Naive thymus-derived CD4-positive, alpha-beta T cell (primary cell): ENCODE measurements at regions of chr6 and their contacts with region 1.

Region 1: GRCh38 chr6:158686791-158687381 is 37.0 kb downstream of the SYTL3 start:
- DNase-seq: peak; percentile 29 to 92 (median 87)
- ATAC-seq: peak; percentile 96
- H3K4me3 ChIP-seq: peak overlapping the region; percentile 31
- H3K4me3 Mint-ChIP-seq: peak overlapping the region; percentile 66 to 91 (median 79)
- H3K27ac ChIP-seq: peak overlapping the region; percentile 82
- H3K27ac Mint-ChIP-seq: peak overlapping the region; percentile 88 to 100 (median 98)
- H3K4me1 ChIP-seq: peaks cover 28 to 49% of the 10 kb centered on the region in 2 donors
- H3K4me1 Mint-ChIP-seq: peaks cover 36 to 76% (median 70%) of the 10 kb centered on the region in 7 donors
- H3K27me3 ChIP-seq: no peaks in the 10 kb centered on the region
- H3K27me3 Mint-ChIP-seq: no peaks in the 10 kb centered on the region

Region 2: GRCh38 chr6:158207422-158207788 is 479.5 kb before region 1 on chr6:
- CTCF ChIA-PET with region 1: no interaction called
- POLR2A ChIA-PET with region 1: no interaction called
- intact Hi-C with region 1: loop called in 1 of 2 experiments (anchors 1 kb)
- DNase-seq: peak in 4 of 9 donors; percentile 9 to 42 (median 18)
- ATAC-seq: peak; percentile 54
- H3K4me3 ChIP-seq: no peak overlapping the region
- H3K4me3 Mint-ChIP-seq: peak overlapping the region in 7 of 10 donors; percentile 2 to 66 (median 22)
- H3K27ac ChIP-seq: no peak overlapping the region
- H3K27ac Mint-ChIP-seq: peak overlapping the region in 7 of 9 donors; percentile 4 to 90 (median 25)
- H3K4me1 ChIP-seq: no peaks in the 10 kb centered on the region
- H3K4me1 Mint-ChIP-seq: peaks cover 6 to 47% (median 13%) of the 10 kb centered on the region in 7 donors
- H3K27me3 ChIP-seq: no peaks in the 10 kb centered on the region
- H3K27me3 Mint-ChIP-seq: peaks cover 0 to 10% (median 4%) of the 10 kb centered on the region in 5 donors

Region 3: DNA sequence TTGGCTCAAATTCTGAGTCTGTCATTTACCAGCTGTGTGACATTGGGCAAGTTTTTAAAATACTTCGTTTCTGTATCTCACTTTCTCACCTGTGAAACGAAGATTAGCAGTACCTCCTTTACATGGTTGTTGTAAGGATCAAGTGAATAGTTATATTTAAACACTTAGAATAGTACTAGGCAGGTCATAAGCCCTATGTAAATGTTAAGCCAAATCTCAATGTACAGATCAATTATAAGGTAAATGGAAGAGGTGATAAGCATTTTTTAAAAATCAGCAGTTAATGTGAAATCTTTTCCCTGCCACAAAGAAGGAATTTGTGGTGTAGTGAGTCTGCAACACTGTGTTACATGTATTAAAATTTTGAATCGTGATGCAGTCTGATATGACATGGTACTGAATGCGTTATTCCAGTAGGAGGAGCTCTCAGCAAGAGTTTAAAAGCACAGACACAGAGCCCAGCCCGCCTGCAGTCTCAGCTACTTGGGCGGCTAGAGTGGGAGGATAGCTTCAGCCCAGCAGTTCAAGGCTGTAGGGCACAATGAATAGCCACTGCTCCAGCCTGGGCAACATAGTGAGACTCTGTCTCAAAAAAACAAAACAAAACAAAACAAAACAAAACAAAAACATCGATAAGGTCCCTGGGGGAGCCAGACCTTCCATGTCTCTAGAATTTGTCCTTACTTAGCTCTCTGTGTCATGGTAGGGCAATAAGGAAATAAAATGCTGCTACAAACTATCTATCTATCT is 472.8 kb before region 1 on chr6:
- CTCF ChIA-PET with region 1: interaction called, 3 read pairs
- POLR2A ChIA-PET with region 1: no interaction called
- intact Hi-C with region 1: loop called (anchors 1 kb)
- DNase-seq: peak; percentile 18 to 62 (median 49)
- ATAC-seq: peak; percentile 96
- H3K4me3 ChIP-seq: no peak overlapping the region
- H3K4me3 Mint-ChIP-seq: no peak overlapping the region
- H3K27ac ChIP-seq: no peak overlapping the region
- H3K27ac Mint-ChIP-seq: no peak overlapping the region
- H3K4me1 ChIP-seq: no peaks in the 10 kb centered on the region
- H3K4me1 Mint-ChIP-seq: peaks cover under 1 to 16% (median 2%) of the 10 kb centered on the region in 7 donors
- H3K27me3 ChIP-seq: no peaks in the 10 kb centered on the region
- H3K27me3 Mint-ChIP-seq: peaks cover 0 to 2% (median 0%) of the 10 kb centered on the region in 5 donors

Region 4: GRCh38 chr6:158518191-158519127 is 168.4 kb before region 1 on chr6:
- CTCF ChIA-PET with region 1: no interaction called
- POLR2A ChIA-PET with region 1: no interaction called
- intact Hi-C with region 1: loop called in 1 of 2 experiments (anchors 2 kb)
- DNase-seq: peak in 7 of 9 donors; percentile 34 to 56 (median 38)
- ATAC-seq: peak; percentile 86
- H3K4me3 ChIP-seq: peak overlapping the region; percentile 31
- H3K4me3 Mint-ChIP-seq: peak overlapping the region; percentile 63 to 92 (median 82)
- H3K27ac ChIP-seq: no peak overlapping the region
- H3K27ac Mint-ChIP-seq: peak overlapping the region in 6 of 9 donors; percentile 18 to 86 (median 28)
- H3K4me1 ChIP-seq: peaks cover 16 to 17% of the 10 kb centered on the region in 2 donors
- H3K4me1 Mint-ChIP-seq: peaks cover 23 to 43% (median 38%) of the 10 kb centered on the region in 7 donors
- H3K27me3 ChIP-seq: no peaks in the 10 kb centered on the region
- H3K27me3 Mint-ChIP-seq: peaks cover 3 to 26% (median 23%) of the 10 kb centered on the region in 5 donors

Region 5: DNA sequence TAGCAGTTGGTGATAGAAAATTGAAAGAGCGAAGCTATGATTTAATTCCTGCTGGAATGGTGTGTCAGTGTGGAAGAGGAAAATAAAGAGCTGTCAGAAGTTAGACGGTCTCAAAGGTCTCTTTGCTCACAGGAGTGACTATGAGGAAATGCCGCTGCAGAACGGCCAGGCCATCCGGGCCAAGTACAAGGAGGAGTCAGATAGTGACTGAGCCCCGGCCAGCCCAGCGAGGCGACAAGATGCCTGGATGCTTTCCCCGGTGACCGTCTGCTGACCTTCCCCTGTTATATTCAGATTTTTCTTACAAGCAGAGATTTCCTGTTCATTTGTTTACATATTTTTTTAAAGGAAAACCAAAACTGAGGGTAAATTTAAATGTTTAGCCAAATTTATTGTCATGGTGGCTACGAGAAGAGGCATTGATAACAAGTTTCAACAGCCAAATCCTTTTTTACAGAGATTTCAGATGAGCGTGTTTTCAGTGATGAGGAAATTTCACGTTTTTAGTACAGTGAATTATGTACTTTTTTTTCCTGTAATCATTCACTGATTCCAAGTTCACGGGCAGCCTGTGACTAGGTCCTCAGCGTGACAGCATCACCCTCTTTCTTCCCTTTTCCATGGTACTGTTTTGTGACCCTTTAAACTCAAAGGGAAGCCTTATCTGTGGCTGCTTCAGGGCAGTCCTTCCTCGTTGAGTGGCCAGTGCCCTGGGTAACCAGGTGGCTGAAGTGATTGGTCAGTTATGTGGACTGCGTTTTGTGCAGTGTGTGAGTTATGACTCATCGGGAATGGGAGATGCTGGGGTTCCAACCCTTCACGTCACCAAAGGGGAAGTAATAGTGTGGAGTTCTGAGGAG is 55.0 kb before region 1 on chr6:
- CTCF ChIA-PET with region 1: interaction called, 29 read pairs
- POLR2A ChIA-PET with region 1: interaction called, 5 read pairs
- intact Hi-C with region 1: loop called in 1 of 2 experiments (anchors 1 kb)
- DNase-seq: no peak
- ATAC-seq: peak; percentile 47
- H3K4me3 ChIP-seq: no peak overlapping the region
- H3K4me3 Mint-ChIP-seq: no peak overlapping the region
- H3K27ac ChIP-seq: peak overlapping the region; percentile 49
- H3K27ac Mint-ChIP-seq: peak overlapping the region; percentile 52 to 91 (median 83)
- H3K4me1 ChIP-seq: peaks cover 15 to 16% of the 10 kb centered on the region in 2 donors
- H3K4me1 Mint-ChIP-seq: peaks cover 21 to 61% (median 48%) of the 10 kb centered on the region in 7 donors
- H3K27me3 ChIP-seq: no peaks in the 10 kb centered on the region
- H3K27me3 Mint-ChIP-seq: no peaks in the 10 kb centered on the region

Region 6: GRCh38 chr6:158644231-158645063 is 42.4 kb before region 1 on chr6 and contains the start of gene DYNLT1:
- CTCF ChIA-PET with region 1: interaction called, 19 read pairs
- POLR2A ChIA-PET with region 1: interaction called, 5 read pairs
- intact Hi-C with region 1: loop called (anchors 1 kb)
- DNase-seq: peak; percentile 72 to 99 (median 87)
- ATAC-seq: peak; percentile 88
- H3K4me3 ChIP-seq: peak within 1 kb of the TSS; percentile 81
- H3K4me3 Mint-ChIP-seq: peak within 1 kb of the TSS; percentile 92 to 100 (median 99)
- H3K27ac ChIP-seq: peak within 1 kb of the TSS; percentile 97
- H3K27ac Mint-ChIP-seq: peak within 1 kb of the TSS; percentile 88 to 100 (median 98)
- H3K4me1 ChIP-seq: peaks cover 35 to 45% of the 10 kb centered on the region in 2 donors
- H3K4me1 Mint-ChIP-seq: peaks cover 47 to 72% (median 67%) of the 10 kb centered on the region in 7 donors
- H3K27me3 ChIP-seq: no peaks in the 10 kb centered on the region
- H3K27me3 Mint-ChIP-seq: no peaks in the 10 kb centered on the region
- total RNA-seq, gene DYNLT1: 66.4 to 122 (median 75.9) TPM

Region 7: DNA sequence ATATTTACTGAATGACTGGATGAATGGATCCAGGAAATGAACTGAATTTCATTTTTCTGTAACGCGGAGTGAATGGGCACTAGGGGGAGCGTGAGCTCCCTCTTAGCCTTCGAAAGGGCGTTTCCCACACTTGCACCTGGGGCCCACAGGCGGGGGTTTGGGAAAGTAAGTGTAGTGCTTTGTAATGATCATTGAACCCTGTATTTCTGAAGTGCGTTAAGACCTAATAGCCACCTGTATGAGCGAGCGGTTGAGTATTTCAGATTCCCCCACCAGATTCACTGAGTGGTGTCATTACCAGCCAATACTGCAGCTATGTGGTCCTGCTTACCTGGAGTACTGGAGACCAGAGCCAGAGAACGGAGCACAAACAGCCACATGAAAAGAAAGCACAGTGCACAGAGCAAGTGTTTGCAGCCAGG is 26.5 kb before region 1 on chr6:
- CTCF ChIA-PET with region 1: interaction called, 107 read pairs
- POLR2A ChIA-PET with region 1: interaction called, 14 read pairs
- intact Hi-C with region 1: loop called (anchors 1 kb)
- DNase-seq: peak in 7 of 9 donors; percentile 62 to 82 (median 78)
- ATAC-seq: peak; percentile 80
- H3K4me3 ChIP-seq: no peak overlapping the region
- H3K4me3 Mint-ChIP-seq: peak overlapping the region; percentile 25 to 77 (median 70)
- H3K27ac ChIP-seq: peak overlapping the region; percentile 54
- H3K27ac Mint-ChIP-seq: peak overlapping the region; percentile 29 to 97 (median 90)
- H3K4me1 ChIP-seq: peaks cover 9 to 36% of the 10 kb centered on the region in 2 donors
- H3K4me1 Mint-ChIP-seq: peaks cover 15 to 76% (median 62%) of the 10 kb centered on the region in 7 donors
- H3K27me3 ChIP-seq: no peaks in the 10 kb centered on the region
- H3K27me3 Mint-ChIP-seq: no peaks in the 10 kb centered on the region